Activated CD4-positive, alpha-beta memory T cell treated with anti-CD3 and anti-CD28 coated beads, Interleukin-2, amount 10 ng/mL, durations not matched to agents 7 days and 5 days (primary cell): ENCODE measurements at regions of chr12 and their contacts with region 1.

Region 1: DNA sequence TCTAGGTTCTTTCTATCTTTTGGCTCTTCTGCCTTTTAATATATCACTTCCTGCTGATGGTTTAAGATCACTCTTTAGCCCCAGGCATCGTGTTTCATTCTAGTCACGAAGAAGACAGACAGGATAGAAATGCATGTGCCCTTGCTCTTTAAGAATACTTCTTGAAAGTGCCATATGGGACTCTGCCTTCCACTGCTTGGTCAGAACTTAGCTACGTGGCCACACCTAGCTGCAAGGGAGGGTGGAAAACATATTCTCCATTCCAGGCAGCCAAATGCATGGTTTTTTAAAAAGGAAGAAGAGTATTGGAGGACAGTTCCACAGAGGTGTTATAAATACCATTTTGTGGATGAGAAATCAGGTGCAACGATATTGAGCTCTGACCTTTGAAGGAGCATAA is 143.3 kb downstream of the KLRB1 start:
- DNase-seq: no peak
- H3K4me3 Mint-ChIP-seq: no peak overlapping the region
- H3K27ac Mint-ChIP-seq: no peak overlapping the region
- H3K4me1 Mint-ChIP-seq: peaks cover 12% of the 10 kb centered on the region
- H3K27me3 Mint-ChIP-seq: no peaks in the 10 kb centered on the region

Region 2: DNA sequence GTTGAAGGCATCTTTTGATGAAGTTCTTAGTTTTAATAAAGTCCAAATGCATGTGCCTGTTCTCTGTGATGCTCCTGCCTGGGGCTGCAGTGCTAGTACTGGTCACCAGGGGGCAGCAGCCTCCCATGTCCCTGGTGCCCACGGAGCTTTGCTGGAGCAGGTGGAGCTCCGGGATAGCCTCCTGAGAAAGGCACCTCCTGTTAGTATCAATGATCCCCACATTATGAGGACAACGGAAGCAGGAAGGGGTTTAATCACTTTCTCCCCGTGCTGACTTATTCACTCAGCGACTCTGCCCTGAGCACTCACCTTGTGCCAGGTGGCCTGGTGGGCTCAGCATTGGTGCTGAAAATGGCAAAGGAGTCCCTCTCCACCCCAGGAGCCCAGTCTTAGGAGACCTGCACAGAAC is 133.2 kb before region 1 on chr12:
- CTCF ChIA-PET with region 1: interaction called, 15 read pairs
- POLR2A ChIA-PET with region 1: no interaction called
- DNase-seq: peak; percentile 73
- H3K4me3 Mint-ChIP-seq: no peak overlapping the region
- H3K27ac Mint-ChIP-seq: no peak overlapping the region
- H3K4me1 Mint-ChIP-seq: peaks cover 14% of the 10 kb centered on the region
- H3K27me3 Mint-ChIP-seq: no peaks in the 10 kb centered on the region

Region 3: DNA sequence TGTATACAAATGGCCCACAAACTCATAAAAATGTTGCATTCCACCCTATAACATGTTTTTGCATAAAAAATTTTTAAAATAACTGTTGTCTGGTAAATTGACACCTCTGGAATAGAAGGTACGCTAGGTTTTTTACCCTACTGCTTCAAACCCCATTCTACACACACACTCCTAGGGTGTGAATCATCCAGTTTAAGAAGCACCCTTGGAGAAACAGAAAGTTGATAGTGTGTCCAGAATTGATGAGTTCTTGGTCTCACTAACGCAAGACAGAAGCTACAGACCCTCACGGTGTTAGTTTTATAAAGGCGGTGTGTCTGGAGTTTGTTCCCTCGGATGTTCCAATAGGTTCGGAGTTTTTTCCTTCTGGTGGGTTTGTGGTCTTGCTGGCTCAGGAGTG is 15.2 kb before region 1 on chr12:
- CTCF ChIA-PET with region 1: interaction called, 10 read pairs
- POLR2A ChIA-PET with region 1: interaction called, 4 read pairs
- DNase-seq: no peak
- H3K4me3 Mint-ChIP-seq: peak overlapping the region; percentile 97
- H3K27ac Mint-ChIP-seq: peak overlapping the region; percentile 45
- H3K4me1 Mint-ChIP-seq: peaks cover 29% of the 10 kb centered on the region
- H3K27me3 Mint-ChIP-seq: no peaks in the 10 kb centered on the region